Testis (tissue), 5 donors: ENCODE measurements at regions of chr15 and their contacts with region 1.

Region 1: GRCh38 chr15:80059786-80060355 is 395 bp downstream of the ZFAND6 start:
- DNase-seq: no peak
- H3K4me3 ChIP-seq: peak overlapping the region; percentile 94 to 97
- H3K27ac ChIP-seq: peak overlapping the region; percentile 93 to 95
- H3K4me1 ChIP-seq: no peaks in the 10 kb centered on the region
- H3K27me3 ChIP-seq: no peaks in the 10 kb centered on the region
- CTCF ChIP-seq: no peak
- POLR2A ChIP-seq: no peak

Region 2: GRCh38 chr15:80160570-80161156 is 100.8 kb after region 1 on chr15:
- intact Hi-C with region 1: loop called (anchors 10 kb)
- DNase-seq: no peak
- H3K4me3 ChIP-seq: no peak overlapping the region
- H3K27ac ChIP-seq: no peak overlapping the region
- H3K4me1 ChIP-seq: peaks cover 15% of the 10 kb centered on the region
- H3K27me3 ChIP-seq: no peaks in the 10 kb centered on the region
- CTCF ChIP-seq: no peak
- POLR2A ChIP-seq: no peak